ENCODE measurements at regions of chr6 and their contacts with region 1.

Region 1: GRCh38 chr6:37381579-37381978 is 27.8 kb downstream of the RNF8 start:
- DNase-seq: no peak

Region 2: GRCh38 chr6:37257634-37258404 is 123.8 kb before region 1 on chr6 and contains the starts of genes TBC1D22B and TMEM217:
- intact Hi-C with region 1: no loop called
- DNase-seq: peak; percentile 98
- total RNA-seq, gene TBC1D22B: 6.2 to 8.5 TPM
- total RNA-seq, gene TMEM217: 0.56 to 2.0 TPM

Region 3: GRCh38 chr6:37566111-37566949 is 184.8 kb after region 1 on chr6:
- intact Hi-C with region 1: loop called in 1 of 2 experiments (anchors 10 kb)
- DNase-seq: peak; percentile 85